MCF 10A (cell line): ENCODE measurements at regions of chr20 and their contacts with region 1.

Region 1: GRCh38 chr20:53594068-53595017 is 704 bp upstream of the ZNF217 start:
- DNase-seq: peak; percentile 90
- H3K4me3 Mint-ChIP-seq: peak overlapping the region; percentile 82
- H3K27ac Mint-ChIP-seq: peak overlapping the region; percentile 93
- H3K4me1 Mint-ChIP-seq: peaks cover 29% of the 10 kb centered on the region
- H3K27me3 Mint-ChIP-seq: no peaks in the 10 kb centered on the region
- CTCF ChIP-seq: peak; percentile 23

Region 2: GRCh38 chr20:53162251-53162835 is 432.0 kb before region 1 on chr20:
- CTCF ChIA-PET with region 1: no interaction called
- POLR2A ChIA-PET with region 1: no interaction called
- intact Hi-C with region 1: no loop called
- DNase-seq: peak; percentile 56
- H3K4me3 Mint-ChIP-seq: peak overlapping the region; percentile 5
- H3K27ac Mint-ChIP-seq: peak overlapping the region; percentile 21
- H3K4me1 Mint-ChIP-seq: peaks cover 17% of the 10 kb centered on the region
- H3K27me3 Mint-ChIP-seq: no peaks in the 10 kb centered on the region
- CTCF ChIP-seq: no peak

Region 3: GRCh38 chr20:53570521-53571357 is 23.6 kb before region 1 on chr20:
- CTCF ChIA-PET with region 1: no interaction called
- POLR2A ChIA-PET with region 1: no interaction called
- intact Hi-C with region 1: no loop called
- DNase-seq: no peak
- H3K4me3 Mint-ChIP-seq: no peak overlapping the region
- H3K27ac Mint-ChIP-seq: no peak overlapping the region
- H3K4me1 Mint-ChIP-seq: peaks cover 9% of the 10 kb centered on the region
- H3K27me3 Mint-ChIP-seq: no peaks in the 10 kb centered on the region
- CTCF ChIP-seq: no peak

Region 4: GRCh38 chr20:53643031-53643832 is 48.9 kb after region 1 on chr20:
- CTCF ChIA-PET with region 1: no interaction called
- POLR2A ChIA-PET with region 1: interaction called, 16 read pairs
- intact Hi-C with region 1: loop called (anchors 5 kb)
- DNase-seq: peak; percentile 79
- H3K4me3 Mint-ChIP-seq: peak overlapping the region; percentile 51
- H3K27ac Mint-ChIP-seq: peak overlapping the region; percentile 97
- H3K4me1 Mint-ChIP-seq: peaks cover 12% of the 10 kb centered on the region
- H3K27me3 Mint-ChIP-seq: no peaks in the 10 kb centered on the region
- CTCF ChIP-seq: no peak

Region 5: GRCh38 chr20:53750827-53751619 is 156.7 kb after region 1 on chr20:
- CTCF ChIA-PET with region 1: no interaction called
- POLR2A ChIA-PET with region 1: interaction called, 11 read pairs
- intact Hi-C with region 1: loop called (anchors 5 kb)
- DNase-seq: no peak
- H3K4me3 Mint-ChIP-seq: no peak overlapping the region
- H3K27ac Mint-ChIP-seq: peak overlapping the region; percentile 83
- H3K4me1 Mint-ChIP-seq: peaks cover 29% of the 10 kb centered on the region
- H3K27me3 Mint-ChIP-seq: no peaks in the 10 kb centered on the region
- CTCF ChIP-seq: no peak

Region 6: GRCh38 chr20:53905019-53905847 is 310.9 kb after region 1 on chr20:
- CTCF ChIA-PET with region 1: interaction called, 3 read pairs
- POLR2A ChIA-PET with region 1: interaction called, 41 read pairs
- intact Hi-C with region 1: no loop called
- DNase-seq: no peak
- H3K4me3 Mint-ChIP-seq: no peak overlapping the region
- H3K27ac Mint-ChIP-seq: peak overlapping the region; percentile 93
- H3K4me1 Mint-ChIP-seq: peaks cover 52% of the 10 kb centered on the region
- H3K27me3 Mint-ChIP-seq: no peaks in the 10 kb centered on the region
- CTCF ChIP-seq: no peak

Region 7: GRCh38 chr20:54606380-54606997 is 1012.1 kb after region 1 on chr20:
- CTCF ChIA-PET with region 1: no interaction called
- POLR2A ChIA-PET with region 1: no interaction called
- intact Hi-C with region 1: no loop called
- DNase-seq: no peak
- H3K4me3 Mint-ChIP-seq: no peak overlapping the region
- H3K27ac Mint-ChIP-seq: no peak overlapping the region
- H3K4me1 Mint-ChIP-seq: no peaks in the 10 kb centered on the region
- H3K27me3 Mint-ChIP-seq: peaks cover 15% of the 10 kb centered on the region
- CTCF ChIP-seq: no peak